ENCODE measurements at regions of chr1 and their contacts with region 1.

Region 1: GRCh38 chr1:166905900-166906299 is 29.8 kb upstream of the TADA1 start:
- DNase-seq: no peak
- ATAC-seq: no peak
- H3K4me3 ChIP-seq: no peak overlapping the region
- H3K27ac ChIP-seq: no peak overlapping the region
- H3K4me1 ChIP-seq: no peaks in the 10 kb centered on the region
- H3K27me3 ChIP-seq: no peaks in the 10 kb centered on the region
- CTCF ChIP-seq: no peak
- POLR2A ChIP-seq: no peak

Region 2: GRCh38 chr1:166947398-166948043 is 41.6 kb after region 1 on chr1:
- intact Hi-C with region 1: no loop called
- DNase-seq: peak; percentile 18 to 46 (median 37)
- ATAC-seq: peak; percentile 67
- H3K4me3 ChIP-seq: no peak overlapping the region
- H3K27ac ChIP-seq: no peak overlapping the region
- H3K4me1 ChIP-seq: peaks cover 6% of the 10 kb centered on the region
- H3K27me3 ChIP-seq: peaks cover 0 to 5% of the 10 kb centered on the region in 2 donors
- CTCF ChIP-seq: no peak
- POLR2A ChIP-seq: no peak

Region 3: GRCh38 chr1:167059045-167059808 is 153.3 kb after region 1 on chr1:
- intact Hi-C with region 1: loop called (anchors 5 kb)
- DNase-seq: peak; percentile 75 to 83 (median 79)
- ATAC-seq: peak; percentile 63
- H3K4me3 ChIP-seq: no peak overlapping the region
- H3K27ac ChIP-seq: no peak overlapping the region
- H3K4me1 ChIP-seq: peaks cover 6% of the 10 kb centered on the region
- H3K27me3 ChIP-seq: no peaks in the 10 kb centered on the region
- CTCF ChIP-seq: peak; percentile 89 to 94 (median 92)
- POLR2A ChIP-seq: no peak

Measured in body of pancreas (tissue), 4 donors.